ENCODE measurements at regions of chr3 and their contacts with region 1.

Region 1: GRCh38 chr3:47513125-47513929 is at the start of gene ELP6:
- DNase-seq: peak; percentile 88
- ATAC-seq: peak; percentile 99
- H3K4me3 ChIP-seq: peak within 1 kb of the TSS; percentile 73
- H3K27ac ChIP-seq: peak within 1 kb of the TSS; percentile 99
- H3K4me1 ChIP-seq: peaks cover 6% of the 10 kb centered on the region; the same call in 1 of the 2 replicates
- H3K27me3 ChIP-seq: no peaks in the 10 kb centered on the region
- CTCF ChIP-seq: peak; percentile 75 to 82 (median 81)
- EP300 ChIP-seq: no peak
- POLR2A ChIP-seq: peak; percentile 94
- RAD21 ChIP-seq: peak; percentile 61
- polyA plus RNA-seq, gene ELP6: 46.4 to 51.1 TPM

Region 2: DNA sequence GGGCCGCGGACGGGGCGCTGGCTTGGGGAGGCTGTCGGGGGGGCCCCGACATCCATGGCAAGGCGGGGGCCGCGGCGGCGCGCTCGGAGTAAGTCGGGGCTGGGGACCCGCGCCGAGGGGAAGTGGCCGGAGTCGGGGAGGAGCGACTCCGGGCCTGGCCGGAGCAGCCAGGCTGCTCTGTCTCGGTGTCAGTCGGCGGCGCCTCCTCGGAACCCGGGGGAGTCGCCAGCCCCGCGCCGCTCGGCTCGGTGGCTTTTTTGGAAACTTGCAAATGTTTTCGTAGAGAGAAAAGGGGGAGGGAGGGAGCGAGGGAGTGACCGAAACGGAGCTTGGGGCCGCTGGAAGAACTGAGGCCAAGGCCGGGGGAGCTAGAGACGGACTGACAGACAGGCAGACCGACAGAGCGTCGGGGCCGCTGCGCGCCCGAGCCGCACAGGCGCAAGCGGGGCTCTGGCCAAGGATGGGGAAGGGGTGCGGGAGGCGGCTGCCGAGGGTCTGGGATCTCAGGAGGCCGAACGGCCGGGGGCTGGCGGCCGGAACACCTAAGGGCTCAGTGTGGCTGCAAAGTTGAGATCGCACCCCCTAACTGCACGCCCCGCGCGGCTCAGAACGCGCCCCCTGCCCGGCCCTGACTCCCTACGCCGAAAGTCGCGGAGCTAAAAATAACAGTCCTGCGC is 630.8 kb before region 1 on chr3:
- CTCF ChIA-PET with region 1: no interaction called
- POLR2A ChIA-PET with region 1: no interaction called
- RAD21 ChIA-PET with region 1: no interaction called
- SMC1A ChIA-PET with region 1: no interaction called
- in situ Hi-C with region 1: no loop called
- intact Hi-C with region 1: no loop called
- DNase-seq: no peak
- ATAC-seq: peak; percentile 44
- H3K4me3 ChIP-seq: peak overlapping the region; percentile 60
- H3K27ac ChIP-seq: no peak overlapping the region
- H3K4me1 ChIP-seq: no peaks in the 10 kb centered on the region
- H3K27me3 ChIP-seq: peaks cover 11 to 17% of the 10 kb centered on the region in 2 experiments
- CTCF ChIP-seq: no peak
- EP300 ChIP-seq: no peak
- POLR2A ChIP-seq: no peak
- RAD21 ChIP-seq: no peak

Region 3: GRCh38 chr3:47802734-47803477 is 289.6 kb after region 1 on chr3 and contains the start of gene DHX30:
- CTCF ChIA-PET with region 1: no interaction called
- POLR2A ChIA-PET with region 1: interaction called, 3 read pairs
- RAD21 ChIA-PET with region 1: no interaction called
- SMC1A ChIA-PET with region 1: no interaction called
- in situ Hi-C with region 1: no loop called
- intact Hi-C with region 1: loop called (anchors 5 kb)
- DNase-seq: no peak
- ATAC-seq: peak; percentile 97
- H3K4me3 ChIP-seq: peak within 1 kb of the TSS; percentile 92
- H3K27ac ChIP-seq: peak within 1 kb of the TSS; percentile 74
- H3K4me1 ChIP-seq: peaks cover 11% of the 10 kb centered on the region
- H3K27me3 ChIP-seq: no peaks in the 10 kb centered on the region
- CTCF ChIP-seq: no peak
- EP300 ChIP-seq: no peak
- POLR2A ChIP-seq: peak; percentile 78
- RAD21 ChIP-seq: no peak
- polyA plus RNA-seq, gene DHX30: 9.5 to 12.6 TPM

Measured in GM12878 (cell line).